Activated CD4-positive, alpha-beta T cell treated with anti-CD3 and anti-CD28 coated beads, Interleukin-2, amount 10 ng/mL, durations not matched to agents 24 days and 14 days (primary cell): ENCODE measurements at regions of chr6 and their contacts with region 1.

Region 1: DNA sequence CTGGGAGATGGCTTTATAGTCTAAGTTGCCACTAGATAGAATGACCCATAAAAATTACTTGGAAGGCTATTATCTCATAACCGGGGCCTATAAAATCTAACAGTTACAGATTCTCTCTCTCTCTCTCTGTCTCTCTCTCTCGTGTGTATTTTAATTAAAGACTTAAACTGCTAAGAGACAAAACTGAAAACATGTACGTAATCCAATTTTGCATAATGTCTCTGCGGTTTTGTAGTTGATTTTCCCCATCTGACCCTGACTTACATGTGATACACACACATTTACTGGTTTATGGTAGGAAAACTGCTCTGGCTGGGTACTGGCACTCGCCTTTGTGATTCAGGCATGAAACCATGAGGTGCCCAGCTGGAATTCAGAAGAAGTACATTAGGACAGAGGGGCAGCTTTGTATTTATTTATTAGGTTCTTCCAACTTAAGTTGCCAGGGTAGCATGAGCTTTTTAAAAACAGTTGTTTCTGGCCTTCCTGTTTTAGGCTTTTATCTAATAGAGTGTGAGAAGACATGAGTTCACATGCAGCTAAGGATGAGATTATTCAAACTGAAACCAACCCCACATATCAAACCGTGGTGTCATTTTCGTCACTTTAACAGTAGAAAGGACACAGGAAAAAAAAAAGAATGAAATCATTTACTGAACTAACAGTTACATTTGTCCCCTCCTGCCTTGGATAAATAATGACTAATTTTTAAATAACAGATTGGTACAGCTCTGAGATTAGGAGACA is 182.5 kb downstream of the GMPR start:
- DNase-seq: peak; percentile 87
- H3K4me3 Mint-ChIP-seq: peak overlapping the region; percentile 79
- H3K27ac Mint-ChIP-seq: peak overlapping the region; percentile 90
- H3K4me1 Mint-ChIP-seq: peaks cover 50% of the 10 kb centered on the region
- H3K27me3 Mint-ChIP-seq: no peaks in the 10 kb centered on the region

Region 2: DNA sequence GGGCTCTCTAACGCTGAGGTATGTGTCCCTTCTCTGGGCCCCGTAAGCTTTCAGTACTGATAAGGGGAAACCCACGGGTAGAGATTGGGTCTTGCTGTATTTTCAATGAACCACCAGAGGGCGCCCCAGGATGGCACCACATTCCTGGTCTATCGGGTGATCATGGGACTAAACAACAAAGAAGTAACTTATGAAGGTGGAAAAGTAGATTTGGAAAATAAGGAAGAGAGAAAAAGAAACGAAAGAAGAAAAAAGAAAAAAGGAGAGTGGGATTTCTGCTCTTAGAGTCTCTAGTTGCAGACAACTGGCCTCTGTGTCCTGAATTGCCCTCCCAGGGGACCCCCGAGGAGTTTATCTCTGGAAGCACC is 88.7 kb before region 1 on chr6:
- intact Hi-C with region 1: loop called (anchors 2 kb)
- DNase-seq: peak; percentile 94
- H3K4me3 Mint-ChIP-seq: no peak overlapping the region
- H3K27ac Mint-ChIP-seq: no peak overlapping the region
- H3K4me1 Mint-ChIP-seq: peaks cover 3% of the 10 kb centered on the region
- H3K27me3 Mint-ChIP-seq: no peaks in the 10 kb centered on the region

Region 3: GRCh38 chr6:16355699-16356446 is 65.0 kb before region 1 on chr6:
- intact Hi-C with region 1: no loop called
- DNase-seq: no peak
- H3K4me3 Mint-ChIP-seq: no peak overlapping the region
- H3K27ac Mint-ChIP-seq: no peak overlapping the region
- H3K4me1 Mint-ChIP-seq: peaks cover 10% of the 10 kb centered on the region
- H3K27me3 Mint-ChIP-seq: no peaks in the 10 kb centered on the region

Region 4: GRCh38 chr6:16437984-16438383 is 17.1 kb after region 1 on chr6:
- intact Hi-C with region 1: loop called (anchors 1 kb)
- DNase-seq: peak; percentile 67
- H3K4me3 Mint-ChIP-seq: peak overlapping the region; percentile 76
- H3K27ac Mint-ChIP-seq: peak overlapping the region; percentile 82
- H3K4me1 Mint-ChIP-seq: peaks cover 56% of the 10 kb centered on the region
- H3K27me3 Mint-ChIP-seq: no peaks in the 10 kb centered on the region

Region 5: GRCh38 chr6:16471222-16471909 is 50.5 kb after region 1 on chr6:
- intact Hi-C with region 1: loop called (anchors 1 kb)
- DNase-seq: no peak
- H3K4me3 Mint-ChIP-seq: peak overlapping the region; percentile 27
- H3K27ac Mint-ChIP-seq: peak overlapping the region; percentile 82
- H3K4me1 Mint-ChIP-seq: peaks cover 58% of the 10 kb centered on the region
- H3K27me3 Mint-ChIP-seq: no peaks in the 10 kb centered on the region

Region 6: GRCh38 chr6:16591396-16592222 is 170.7 kb after region 1 on chr6:
- intact Hi-C with region 1: loop called (anchors 5 kb)
- DNase-seq: no peak
- H3K4me3 Mint-ChIP-seq: peak overlapping the region; percentile 16
- H3K27ac Mint-ChIP-seq: peak overlapping the region; percentile 87
- H3K4me1 Mint-ChIP-seq: peaks cover 24% of the 10 kb centered on the region
- H3K27me3 Mint-ChIP-seq: no peaks in the 10 kb centered on the region